GM10248 (cell line): ENCODE measurements at regions of chr4 and their contacts with region 1.

Region 1: GRCh38 chr4:143399113-143399949 is 62.7 kb downstream of the GAB1 start:
- DNase-seq: no peak
- CTCF ChIP-seq: peak; percentile 58

Region 2: DNA sequence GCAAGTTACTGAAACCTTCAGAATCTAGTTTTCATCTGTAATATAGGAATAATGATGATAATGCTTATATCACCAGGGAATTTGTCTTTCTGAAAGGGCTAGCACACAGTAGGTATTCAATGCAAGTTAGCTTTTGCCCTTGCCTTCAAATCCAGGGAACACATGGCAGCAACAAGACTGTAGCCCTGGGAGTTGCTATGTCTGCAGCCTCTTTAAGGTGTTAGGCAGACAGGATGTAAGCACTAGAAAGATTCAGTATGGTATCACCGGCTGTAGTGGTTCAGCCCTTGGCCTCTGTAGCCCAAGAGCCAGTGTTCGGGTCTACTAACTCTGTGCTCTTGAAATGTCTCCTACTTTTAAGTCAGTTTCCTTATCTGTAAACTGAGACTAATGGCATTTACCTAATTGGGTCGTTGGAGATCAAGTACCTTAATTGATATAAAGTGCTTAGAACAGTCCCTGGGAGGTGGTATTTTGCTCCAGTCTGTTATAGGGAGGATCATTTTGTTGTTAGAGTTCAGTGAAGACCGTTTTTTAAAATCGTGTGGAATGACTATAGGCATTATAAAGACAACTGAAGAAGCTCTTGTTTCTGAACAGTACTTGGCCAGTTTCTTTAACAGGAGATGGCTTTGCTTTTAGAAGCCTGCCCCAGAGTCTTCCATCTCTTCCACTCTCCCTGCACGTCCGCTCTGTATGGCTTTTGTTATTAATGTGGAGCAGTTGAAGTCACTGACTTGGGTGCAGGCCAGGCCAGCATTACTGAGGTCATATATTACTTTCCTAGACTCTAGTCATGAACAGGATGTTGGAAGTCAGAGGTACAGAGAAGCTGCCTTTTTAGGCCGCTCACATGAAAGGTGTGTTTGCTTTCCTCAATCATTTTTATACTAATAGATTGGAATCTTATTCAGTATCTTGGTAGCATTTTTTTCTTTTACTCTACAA is 17.9 kb before region 1 on chr4:
- CTCF ChIA-PET with region 1: interaction called, 44 read pairs
- POLR2A ChIA-PET with region 1: interaction called, 3 read pairs
- DNase-seq: no peak
- CTCF ChIP-seq: no peak

Region 3: DNA sequence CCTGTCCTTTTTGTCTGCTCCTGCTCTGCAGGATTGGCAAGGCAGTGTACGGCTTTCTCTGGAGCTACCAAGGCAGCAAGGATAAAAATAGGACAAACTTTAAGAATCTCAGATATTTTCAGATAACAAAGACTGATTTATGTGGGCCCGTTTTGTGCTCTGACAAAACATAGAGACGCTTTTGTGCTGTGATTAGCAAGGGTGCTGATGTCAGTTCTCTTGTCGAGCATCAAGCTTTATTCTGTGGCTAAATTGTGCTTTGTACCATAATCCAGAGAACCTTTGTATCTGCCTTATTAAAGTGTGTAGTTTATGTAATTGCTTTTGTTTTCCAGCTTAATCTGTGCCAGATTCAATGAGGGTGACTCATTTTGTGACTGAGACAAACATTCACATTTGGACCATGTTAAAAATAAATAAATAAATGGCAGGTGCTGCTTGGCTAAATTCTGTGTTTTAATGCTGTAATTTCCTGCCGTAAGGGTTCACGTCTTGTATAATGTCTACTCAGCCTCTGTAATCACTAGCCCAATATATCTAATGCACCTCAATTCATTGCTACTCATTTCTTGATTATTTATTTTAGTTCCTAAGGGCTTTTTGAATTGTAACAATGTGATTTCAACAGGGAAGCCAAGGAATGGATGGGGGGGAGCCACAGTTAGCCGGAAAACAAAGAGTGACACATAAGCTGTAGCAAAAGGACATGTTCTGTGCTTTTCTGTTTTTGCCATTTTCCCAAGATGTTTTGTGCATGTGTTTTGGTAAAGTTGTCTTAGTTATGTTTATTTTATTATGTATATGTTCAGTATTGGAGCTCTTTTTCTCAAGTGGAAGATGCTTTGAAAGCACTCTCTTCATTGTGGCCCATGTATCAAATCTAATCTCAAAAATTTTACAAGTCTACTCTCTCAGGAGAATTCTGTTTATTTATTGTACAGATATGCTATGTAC is 12.5 kb after region 1 on chr4:
- CTCF ChIA-PET with region 1: interaction called, 42 read pairs
- POLR2A ChIA-PET with region 1: no interaction called
- DNase-seq: no peak
- CTCF ChIP-seq: no peak

Region 4: DNA sequence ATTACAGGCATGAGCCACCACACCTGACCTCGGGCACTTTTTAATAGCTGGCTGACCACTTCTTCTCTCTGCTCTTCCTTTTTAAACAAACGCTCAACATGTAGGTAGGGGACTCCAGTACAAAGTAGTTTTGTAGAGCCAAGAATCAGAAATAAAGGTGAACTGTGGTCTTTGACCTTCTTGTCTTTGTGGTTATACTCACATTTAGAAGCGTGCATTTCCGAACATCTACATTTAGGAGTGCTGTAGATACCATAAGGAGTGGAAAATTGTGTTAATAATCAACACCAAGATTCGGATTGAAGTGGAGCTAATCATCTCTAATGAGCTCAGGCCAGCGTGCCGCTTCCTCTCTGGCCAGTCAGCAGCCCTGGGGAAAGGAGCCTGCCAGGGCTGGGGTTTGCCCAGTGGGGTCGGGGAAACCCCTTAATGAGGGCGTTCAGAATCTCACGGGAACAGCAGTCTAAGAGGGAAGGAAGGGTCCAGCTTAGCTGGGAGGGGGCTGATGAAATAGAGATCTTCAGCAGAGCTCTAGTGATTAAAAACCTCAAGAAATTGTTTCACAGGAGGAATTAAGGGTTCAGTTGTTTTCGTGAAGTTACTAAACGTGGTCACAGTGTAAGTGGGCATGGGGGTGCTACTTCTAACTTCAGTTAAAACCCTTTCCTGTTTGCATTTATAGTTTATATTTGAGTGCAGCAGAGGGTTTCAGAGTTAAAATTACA is 18.5 kb after region 1 on chr4:
- CTCF ChIA-PET with region 1: interaction called, 42 read pairs
- POLR2A ChIA-PET with region 1: no interaction called
- DNase-seq: peak; percentile 50
- CTCF ChIP-seq: no peak